Sciatic nerve (tissue), 2 donors: ENCODE measurements at regions of chr3 and their contacts with region 1.

Region 1: GRCh38 chr3:132641837-132642538 is 17.6 kb downstream of the ACAD11 start:
- DNase-seq: no peak
- ATAC-seq: peak; percentile 76

Region 2: DNA sequence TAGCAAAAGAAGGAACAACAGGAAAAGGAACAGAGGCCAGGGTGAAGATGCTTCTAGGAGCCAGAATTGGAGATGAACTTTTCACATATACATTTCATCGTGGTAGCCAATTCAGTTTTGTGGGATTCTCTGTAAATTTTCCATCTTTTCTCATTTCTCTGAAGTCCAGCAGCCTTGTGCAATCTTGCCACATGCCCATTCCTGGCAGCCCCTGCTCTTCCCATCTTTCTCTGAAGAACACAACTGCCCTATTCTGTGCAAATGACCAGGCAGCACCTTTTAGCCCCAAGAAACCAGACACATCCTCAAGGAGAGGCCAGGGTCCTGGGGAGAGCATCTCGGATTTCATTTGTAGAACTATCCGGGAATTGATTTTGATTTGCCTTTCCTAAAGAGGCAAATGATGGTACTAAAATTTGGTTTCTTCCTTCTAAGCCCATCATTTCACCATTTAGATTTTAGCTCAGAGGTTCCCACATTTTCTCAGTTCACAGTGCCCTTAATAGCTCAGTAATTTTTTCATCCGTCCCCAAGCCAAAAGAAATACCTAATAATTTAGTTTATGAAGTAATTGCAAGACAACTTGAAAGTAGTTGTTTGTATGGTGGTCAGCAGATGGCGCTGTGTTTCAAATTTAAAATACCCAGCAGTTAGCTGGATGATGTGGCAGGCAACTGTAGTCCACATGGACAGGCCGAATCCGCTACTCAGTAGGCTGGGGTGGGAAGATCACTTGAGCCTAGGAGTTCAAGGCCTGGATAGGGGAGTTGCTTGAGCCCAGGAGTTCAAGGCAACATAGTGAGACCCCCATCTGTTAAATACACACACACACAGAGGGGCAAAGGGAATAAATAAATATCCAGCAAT is 106.2 kb before region 1 on chr3:
- intact Hi-C with region 1: loop called (anchors 10 kb)
- DNase-seq: peak; percentile 77
- ATAC-seq: peak; percentile 93

Region 3: GRCh38 chr3:132907293-132907692 is 265.3 kb after region 1 on chr3:
- intact Hi-C with region 1: no loop called
- DNase-seq: no peak
- ATAC-seq: no peak

Region 4: DNA sequence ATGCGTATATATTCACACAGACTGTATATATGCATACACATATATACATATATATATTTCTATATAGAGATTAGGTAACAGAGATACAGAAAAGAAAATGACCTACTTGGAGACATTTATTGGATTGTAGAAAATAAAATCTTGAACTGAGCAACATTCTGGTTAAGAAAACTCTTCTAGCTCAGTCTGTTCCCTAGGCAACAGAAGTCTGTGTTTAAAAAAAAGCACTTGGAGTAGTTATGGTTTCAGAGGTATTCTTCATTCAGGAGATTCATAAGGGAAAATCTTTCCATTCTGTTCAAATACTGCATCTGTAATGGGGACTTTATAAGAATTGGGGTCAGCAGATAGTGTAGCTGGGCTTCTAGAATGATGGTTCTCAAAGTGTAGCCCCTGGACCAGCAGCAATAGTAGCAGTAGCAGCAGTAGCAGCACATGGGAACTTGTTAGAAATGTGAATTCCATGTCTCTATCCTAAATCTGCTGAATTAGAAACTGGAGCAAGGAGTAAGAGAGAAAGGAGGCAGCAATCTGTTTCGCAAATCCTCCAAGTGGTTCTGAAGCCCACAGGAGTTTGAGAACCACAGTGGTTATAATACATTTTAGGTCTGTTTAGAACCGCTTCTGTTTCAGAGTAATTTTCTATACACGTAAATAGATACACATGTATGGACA is 283.4 kb after region 1 on chr3:
- intact Hi-C with region 1: no loop called
- DNase-seq: no peak
- ATAC-seq: no peak